Activated CD8-positive, alpha-beta T cell treated with anti-CD3 and anti-CD28 coated beads for 36 hours (primary cell): ENCODE measurements at regions of chr1 and their contacts with region 1.

Region 1: DNA sequence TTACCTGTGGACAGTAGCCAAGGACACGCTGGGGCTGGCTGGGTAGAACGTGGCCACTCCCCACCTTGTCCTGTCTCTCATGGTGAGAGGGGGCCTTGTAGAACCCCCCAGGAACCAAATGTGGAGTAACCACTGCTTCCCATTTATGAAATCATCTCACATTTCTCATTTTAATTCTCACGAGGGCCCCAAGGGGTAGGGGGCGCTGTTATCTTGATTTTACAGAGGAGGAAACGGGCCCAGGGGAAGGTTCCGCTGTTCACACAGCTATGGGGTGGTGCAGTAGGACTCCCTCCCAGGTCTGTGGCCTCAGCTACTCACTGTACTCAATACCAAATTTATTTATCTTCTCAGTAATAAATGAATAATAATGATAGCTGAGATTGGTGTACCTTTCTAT is 5.5 kb downstream of the SMPDL3B start:
- DNase-seq: peak; percentile 89
- ATAC-seq: peak; percentile 87
- H3K4me3 Mint-ChIP-seq: no peak overlapping the region
- H3K27ac Mint-ChIP-seq: peak overlapping the region; percentile 63
- H3K4me1 Mint-ChIP-seq: peaks cover 25% of the 10 kb centered on the region
- H3K27me3 Mint-ChIP-seq: peaks cover 7% of the 10 kb centered on the region
- CTCF ChIP-seq: peak; percentile 82

Region 2: GRCh38 chr1:27752360-27752759 is 187.9 kb before region 1 on chr1:
- CTCF ChIA-PET with region 1: no interaction called
- POLR2A ChIA-PET with region 1: no interaction called
- intact Hi-C with region 1: no loop called
- DNase-seq: no peak
- ATAC-seq: no peak
- H3K4me3 Mint-ChIP-seq: no peak overlapping the region
- H3K27ac Mint-ChIP-seq: no peak overlapping the region
- H3K4me1 Mint-ChIP-seq: no peaks in the 10 kb centered on the region
- H3K27me3 Mint-ChIP-seq: no peaks in the 10 kb centered on the region
- CTCF ChIP-seq: no peak

Region 3: DNA sequence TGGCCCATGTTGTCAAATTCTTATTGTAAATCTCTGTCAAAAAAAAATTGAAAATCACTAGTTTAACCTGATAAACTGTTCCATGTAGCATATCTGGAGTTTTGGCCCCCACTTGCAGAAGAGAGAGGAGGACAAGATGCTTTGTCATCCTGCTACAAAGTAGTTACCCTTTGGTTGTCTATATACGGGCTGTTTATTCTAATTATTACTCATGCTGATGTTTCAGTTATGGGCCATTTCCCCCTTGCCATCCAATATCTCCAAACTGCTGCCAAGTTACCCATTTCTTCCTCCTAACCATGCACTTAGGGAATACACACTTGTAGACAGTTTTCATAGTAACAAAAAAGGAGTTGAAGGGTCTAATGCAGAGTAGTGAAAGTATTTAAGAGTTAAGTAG is 144.7 kb before region 1 on chr1:
- CTCF ChIA-PET with region 1: no interaction called
- POLR2A ChIA-PET with region 1: no interaction called
- intact Hi-C with region 1: no loop called
- DNase-seq: no peak
- ATAC-seq: no peak
- H3K4me3 Mint-ChIP-seq: no peak overlapping the region
- H3K27ac Mint-ChIP-seq: no peak overlapping the region
- H3K4me1 Mint-ChIP-seq: peaks cover 3% of the 10 kb centered on the region
- H3K27me3 Mint-ChIP-seq: no peaks in the 10 kb centered on the region
- CTCF ChIP-seq: no peak

Region 4: DNA sequence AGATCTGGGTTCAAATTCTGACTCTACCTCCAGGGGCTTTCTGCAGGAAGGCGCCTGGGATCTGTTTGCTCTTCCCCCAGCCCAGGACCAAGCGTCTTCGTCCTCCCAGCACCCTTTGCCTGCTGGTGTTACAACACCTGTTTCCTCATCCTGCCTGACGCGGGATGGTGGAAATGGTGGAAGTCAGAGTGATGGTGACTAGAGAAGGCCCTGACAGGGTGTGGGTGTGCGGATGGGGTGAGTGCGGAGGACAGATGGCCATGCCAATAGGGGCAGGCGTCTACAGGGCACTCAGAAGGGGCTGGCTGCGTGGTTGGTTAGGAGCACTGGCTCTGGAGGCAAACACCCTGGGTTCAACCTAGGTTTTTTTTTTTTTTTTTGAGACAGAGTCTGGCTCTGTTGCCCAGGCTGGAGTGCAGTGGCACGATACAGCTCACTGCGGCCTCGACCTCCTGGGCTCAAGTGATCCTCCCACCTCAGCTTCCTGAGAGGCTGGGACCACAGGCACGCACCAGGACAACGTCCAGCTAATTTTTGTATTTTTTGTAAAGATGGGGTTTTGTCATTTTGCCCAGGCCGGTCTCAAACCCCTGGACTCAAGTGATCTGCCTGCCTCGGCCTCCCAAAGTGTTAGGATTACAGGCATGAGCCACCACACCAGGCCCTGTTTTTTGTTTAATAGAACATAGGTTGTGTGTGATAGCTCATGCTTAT is 66.5 kb before region 1 on chr1:
- CTCF ChIA-PET with region 1: no interaction called
- POLR2A ChIA-PET with region 1: no interaction called
- intact Hi-C with region 1: no loop called
- DNase-seq: no peak
- ATAC-seq: no peak
- H3K4me3 Mint-ChIP-seq: peak overlapping the region; percentile 88
- H3K27ac Mint-ChIP-seq: peak overlapping the region; percentile 75
- H3K4me1 Mint-ChIP-seq: peaks cover 36% of the 10 kb centered on the region
- H3K27me3 Mint-ChIP-seq: no peaks in the 10 kb centered on the region
- CTCF ChIP-seq: no peak

Region 5: GRCh38 chr1:27884006-27884954 is 56.0 kb before region 1 on chr1:
- CTCF ChIA-PET with region 1: no interaction called
- POLR2A ChIA-PET with region 1: no interaction called
- intact Hi-C with region 1: no loop called
- DNase-seq: peak; percentile 30
- ATAC-seq: peak; percentile 9
- H3K4me3 Mint-ChIP-seq: no peak overlapping the region
- H3K27ac Mint-ChIP-seq: peak overlapping the region; percentile 7
- H3K4me1 Mint-ChIP-seq: peaks cover 51% of the 10 kb centered on the region
- H3K27me3 Mint-ChIP-seq: no peaks in the 10 kb centered on the region
- CTCF ChIP-seq: no peak

Region 6: DNA sequence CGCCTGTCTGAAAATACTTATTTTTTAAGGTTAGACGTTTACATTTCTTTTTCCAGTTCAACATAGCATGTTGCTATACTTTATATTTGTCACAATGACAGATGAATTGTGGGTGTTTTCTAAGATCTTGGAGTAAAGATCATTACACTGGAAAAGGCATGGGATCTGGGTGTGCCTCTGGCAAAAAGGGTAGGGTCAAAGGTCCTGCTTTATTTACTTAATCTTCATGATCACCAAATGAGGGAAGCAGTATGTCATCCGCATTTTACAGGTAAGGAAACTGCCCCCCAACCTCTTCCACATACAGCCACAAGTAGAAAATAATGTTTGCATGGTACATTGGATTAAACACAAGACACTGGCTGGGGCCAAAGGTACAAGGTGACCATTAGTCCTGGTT is 18.0 kb before region 1 on chr1:
- CTCF ChIA-PET with region 1: interaction called, 10 read pairs
- POLR2A ChIA-PET with region 1: interaction called, 4 read pairs
- intact Hi-C with region 1: no loop called
- DNase-seq: no peak
- ATAC-seq: no peak
- H3K4me3 Mint-ChIP-seq: no peak overlapping the region
- H3K27ac Mint-ChIP-seq: no peak overlapping the region
- H3K4me1 Mint-ChIP-seq: no peaks in the 10 kb centered on the region
- H3K27me3 Mint-ChIP-seq: no peaks in the 10 kb centered on the region
- CTCF ChIP-seq: no peak

Region 7: DNA sequence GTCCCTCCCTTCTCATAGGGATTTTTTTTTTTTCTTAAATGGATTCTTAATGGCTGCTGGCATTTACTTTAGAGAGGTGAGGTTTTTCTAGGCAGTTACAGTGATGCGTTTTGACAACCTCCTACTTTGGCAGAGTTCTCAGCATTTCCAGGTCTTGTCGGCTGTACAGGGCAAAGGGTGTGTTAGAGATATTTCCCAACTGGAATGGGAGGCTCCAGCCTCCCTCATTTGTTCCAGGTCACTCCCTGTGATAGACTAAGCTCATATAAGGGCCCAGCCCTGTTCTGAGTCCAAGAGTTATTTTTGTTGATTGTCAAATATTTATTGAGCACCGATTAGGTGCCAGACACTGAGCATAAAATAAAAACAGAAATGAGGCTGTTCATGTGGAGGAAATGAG is 11.8 kb after region 1 on chr1:
- CTCF ChIA-PET with region 1: interaction called, 26 read pairs
- POLR2A ChIA-PET with region 1: no interaction called
- intact Hi-C with region 1: no loop called
- DNase-seq: no peak
- ATAC-seq: no peak
- H3K4me3 Mint-ChIP-seq: no peak overlapping the region
- H3K27ac Mint-ChIP-seq: no peak overlapping the region
- H3K4me1 Mint-ChIP-seq: no peaks in the 10 kb centered on the region
- H3K27me3 Mint-ChIP-seq: no peaks in the 10 kb centered on the region
- CTCF ChIP-seq: no peak

Region 8: GRCh38 chr1:27959400-27960217 is 19.3 kb after region 1 on chr1 and contains the start of gene XKR8:
- CTCF ChIA-PET with region 1: interaction called, 13 read pairs
- POLR2A ChIA-PET with region 1: interaction called, 3 read pairs
- intact Hi-C with region 1: no loop called
- DNase-seq: peak; percentile 85
- ATAC-seq: peak; percentile 99
- H3K4me3 Mint-ChIP-seq: peak within 1 kb of the TSS; percentile 76
- H3K27ac Mint-ChIP-seq: peak within 1 kb of the TSS; percentile 78
- H3K4me1 Mint-ChIP-seq: peaks cover 19% of the 10 kb centered on the region
- H3K27me3 Mint-ChIP-seq: no peaks in the 10 kb centered on the region
- CTCF ChIP-seq: no peak
- total RNA-seq, gene XKR8: 3.4 to 3.6 TPM

Region 9: GRCh38 chr1:27973771-27974416 is 33.6 kb after region 1 on chr1:
- CTCF ChIA-PET with region 1: interaction called, 23 read pairs
- POLR2A ChIA-PET with region 1: interaction called, 3 read pairs
- intact Hi-C with region 1: no loop called
- DNase-seq: no peak
- ATAC-seq: no peak
- H3K4me3 Mint-ChIP-seq: no peak overlapping the region
- H3K27ac Mint-ChIP-seq: no peak overlapping the region
- H3K4me1 Mint-ChIP-seq: peaks cover 8% of the 10 kb centered on the region
- H3K27me3 Mint-ChIP-seq: no peaks in the 10 kb centered on the region
- CTCF ChIP-seq: no peak

Region 10: GRCh38 chr1:27979151-27979858 is 39.0 kb after region 1 on chr1:
- CTCF ChIA-PET with region 1: interaction called, 23 read pairs
- POLR2A ChIA-PET with region 1: no interaction called
- intact Hi-C with region 1: no loop called
- DNase-seq: no peak
- ATAC-seq: peak; percentile 64
- H3K4me3 Mint-ChIP-seq: no peak overlapping the region
- H3K27ac Mint-ChIP-seq: no peak overlapping the region
- H3K4me1 Mint-ChIP-seq: no peaks in the 10 kb centered on the region
- H3K27me3 Mint-ChIP-seq: no peaks in the 10 kb centered on the region
- CTCF ChIP-seq: peak; percentile 56